Left colon (tissue), 2 donors: ENCODE measurements at regions of chr6 and their contacts with region 1.

Region 1: DNA sequence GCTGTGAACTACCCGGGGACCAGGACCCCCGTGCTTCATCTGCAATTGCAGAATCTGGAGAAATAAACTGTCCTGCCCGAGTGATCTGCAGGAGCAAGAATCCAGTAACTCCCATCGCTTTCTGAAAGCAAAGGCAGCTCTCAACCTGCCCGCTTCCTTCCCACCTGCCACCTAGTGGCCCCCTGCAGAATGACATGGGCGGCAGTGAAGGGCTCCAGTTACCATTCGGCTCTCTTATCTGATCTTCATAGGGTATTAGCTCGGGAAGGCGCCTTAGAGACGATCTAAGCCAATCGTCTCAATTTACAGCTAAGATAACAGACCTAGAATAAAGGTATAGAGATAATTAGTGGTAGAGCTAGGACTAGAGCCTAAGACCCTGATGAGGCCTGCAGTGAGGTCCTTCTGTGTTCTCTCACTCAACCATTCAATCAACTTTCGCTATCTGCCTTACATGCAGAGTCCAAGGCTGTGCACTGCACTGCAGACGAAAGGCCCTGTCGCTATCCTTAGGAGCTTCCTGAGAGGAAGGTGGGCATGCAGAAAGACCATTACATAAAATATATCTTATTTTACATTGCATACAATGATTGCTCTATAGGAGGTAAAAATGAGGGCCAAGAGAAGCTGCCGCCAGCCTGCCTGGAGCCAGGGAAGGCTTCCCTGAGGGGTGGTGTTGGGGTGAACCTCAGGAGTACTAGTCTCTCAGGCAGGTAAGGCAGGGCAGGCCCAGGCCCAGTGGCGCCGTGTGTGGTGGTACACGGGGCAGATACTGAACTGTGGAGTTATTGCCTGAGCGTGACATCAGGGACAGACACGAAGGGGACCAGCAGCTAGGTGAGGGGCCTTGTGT is 7.1 kb upstream of the PSMG4 start:
- DNase-seq: peak; percentile 71 to 84
- ATAC-seq: peak; percentile 84

Region 2: GRCh38 chr6:3075522-3076113 is 176.1 kb before region 1 on chr6:
- intact Hi-C with region 1: no loop called
- DNase-seq: no peak
- ATAC-seq: peak; percentile 24

Region 3: DNA sequence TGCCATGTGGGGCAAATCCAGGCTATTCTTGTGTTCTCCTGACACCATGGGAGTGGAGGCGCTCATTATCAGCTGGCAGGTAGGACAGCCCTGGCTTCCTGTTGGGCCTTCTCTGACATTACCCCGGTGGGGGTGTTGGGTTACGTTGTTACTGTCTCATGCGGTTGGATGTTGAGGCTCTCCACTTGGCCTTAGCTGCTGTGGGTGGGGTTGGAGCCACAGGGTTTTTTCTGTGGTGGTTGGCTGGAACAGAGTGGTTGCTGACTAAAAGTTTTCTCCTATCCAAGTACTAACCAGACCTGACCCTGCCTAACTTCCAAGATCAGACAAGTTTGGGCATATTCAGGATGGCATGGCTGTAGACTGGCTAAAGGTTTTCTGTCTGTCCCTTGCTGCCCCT is 163.2 kb before region 1 on chr6:
- intact Hi-C with region 1: no loop called
- DNase-seq: no peak
- ATAC-seq: no peak

Region 4: DNA sequence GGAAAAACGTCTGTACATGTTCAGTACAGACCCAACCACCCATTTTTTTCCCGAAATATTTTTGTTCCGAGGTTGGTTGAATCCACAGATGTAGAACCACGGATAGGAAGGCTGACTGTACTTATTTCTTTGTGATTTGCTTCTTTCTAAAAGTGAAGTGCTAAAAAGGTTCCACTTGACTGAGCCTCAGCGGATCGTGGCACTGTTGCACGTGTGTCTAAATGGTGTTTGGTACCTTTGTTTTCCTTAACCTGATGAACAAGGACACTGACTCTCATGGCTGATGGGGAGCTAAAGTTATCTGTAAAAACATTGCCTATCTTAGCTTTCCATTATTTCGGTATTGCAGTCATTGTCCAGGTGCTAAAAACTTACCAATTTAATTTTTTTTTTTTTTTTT is 127.0 kb before region 1 on chr6:
- intact Hi-C with region 1: loop called in 1 of 2 experiments (anchors 5 kb)
- DNase-seq: no peak
- ATAC-seq: no peak